ENCODE measurements at regions of chr15 and their contacts with region 1.

Region 1: GRCh38 chr15:98856218-98856907 is 151.2 kb downstream of the PGPEP1L start:
- DNase-seq: peak; percentile 90
- H3K4me3 ChIP-seq: no peak overlapping the region
- H3K27ac ChIP-seq: peak overlapping the region; percentile 91
- H3K27me3 ChIP-seq: no peaks in the 10 kb centered on the region
- CTCF ChIP-seq: no peak

Region 2: GRCh38 chr15:98873441-98874201 is 17.3 kb after region 1 on chr15:
- CTCF ChIA-PET with region 1: interaction called, 4 read pairs
- POLR2A ChIA-PET with region 1: interaction called, 10 read pairs
- DNase-seq: no peak
- H3K4me3 ChIP-seq: peak overlapping the region; percentile 34
- H3K27ac ChIP-seq: peak overlapping the region; percentile 85
- H3K27me3 ChIP-seq: no peaks in the 10 kb centered on the region
- CTCF ChIP-seq: peak; percentile 17; the same call in 1 of the 2 replicates